Stomach (tissue), 19 donors: ENCODE measurements at regions of chr20 and their contacts with region 1.

Region 1: DNA sequence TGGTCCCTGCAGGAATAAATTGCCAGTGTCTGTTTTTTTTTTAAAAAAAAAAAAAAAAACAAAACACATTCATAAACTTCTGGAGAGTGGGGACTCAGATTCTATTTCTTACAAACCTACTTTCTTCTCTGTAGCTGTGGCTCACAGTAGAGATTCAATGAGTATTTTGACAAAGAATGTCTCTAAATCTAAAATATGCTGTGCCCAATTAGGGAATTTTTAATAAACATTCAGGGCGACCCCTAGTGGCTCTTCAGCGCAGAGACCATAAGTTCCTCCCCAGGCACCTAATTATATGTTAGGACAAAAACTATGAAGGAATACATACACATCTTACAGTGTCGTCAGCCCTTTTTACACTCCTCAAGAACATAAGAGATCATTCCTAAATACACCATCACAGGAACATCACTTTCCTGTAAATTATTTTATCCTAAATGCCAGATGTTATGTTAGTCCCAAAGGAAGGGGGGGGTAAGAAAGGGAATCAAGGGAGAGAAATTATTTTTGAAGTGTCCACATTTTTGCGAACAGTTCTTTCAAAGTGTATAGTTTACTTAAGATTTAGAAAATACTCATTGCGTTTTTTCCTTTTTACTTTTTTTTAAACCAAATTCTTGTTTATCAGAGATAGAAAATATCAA is 21.8 kb upstream of the NAA20 start:
- DNase-seq: peak in 1 of 2 donors; percentile 80
- H3K4me3 ChIP-seq: no peak overlapping the region
- H3K27ac ChIP-seq: peak overlapping the region in 3 of 5 donors; percentile 63 to 81 (median 77)
- H3K4me1 ChIP-seq: peaks cover 36 to 84% (median 56%) of the 10 kb centered on the region in 4 donors
- H3K27me3 ChIP-seq: no peaks in the 10 kb centered on the region
- CTCF ChIP-seq: peak in 5 of 7 experiments; percentile 69 to 79 (median 71)
- EP300 ChIP-seq: no peak
- POLR2A ChIP-seq: no peak

Region 2: DNA sequence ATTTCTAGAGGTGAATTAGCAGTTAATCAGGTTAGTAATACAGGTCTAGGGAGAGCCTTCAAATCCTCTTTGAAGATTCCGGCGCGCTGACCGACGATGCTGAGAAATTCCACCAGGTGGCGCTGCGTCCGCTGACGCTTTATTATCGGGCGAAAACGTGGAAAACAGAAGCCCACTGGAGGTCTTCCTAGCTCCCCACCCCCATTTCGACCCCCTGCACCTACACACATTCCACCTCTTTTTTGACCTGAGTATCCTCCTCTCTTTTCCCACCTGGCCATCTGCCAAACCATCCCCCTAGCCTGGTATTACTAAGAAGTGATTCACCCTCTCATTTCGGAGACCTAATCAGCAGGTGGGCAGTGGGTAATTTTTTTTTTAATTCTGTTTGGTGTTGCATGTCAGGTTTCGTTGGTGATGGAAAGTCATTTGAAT is 302.6 kb before region 1 on chr20:
- intact Hi-C with region 1: loop called (anchors 10 kb)
- DNase-seq: peak; percentile 71 to 76
- H3K4me3 ChIP-seq: no peak overlapping the region
- H3K27ac ChIP-seq: no peak overlapping the region
- H3K4me1 ChIP-seq: peaks cover 0 to 13% (median 0%) of the 10 kb centered on the region in 4 donors
- H3K27me3 ChIP-seq: no peaks in the 10 kb centered on the region
- CTCF ChIP-seq: peak in 5 of 7 experiments; percentile 77 to 98 (median 90)
- EP300 ChIP-seq: no peak
- POLR2A ChIP-seq: no peak

Region 3: GRCh38 chr20:19784511-19785172 is 210.7 kb before region 1 on chr20:
- intact Hi-C with region 1: loop called (anchors 10 kb)
- DNase-seq: peak; percentile 38 to 90
- H3K4me3 ChIP-seq: no peak overlapping the region
- H3K27ac ChIP-seq: peak overlapping the region; percentile 12 to 60 (median 38)
- H3K4me1 ChIP-seq: peaks cover 16 to 33% (median 29%) of the 10 kb centered on the region in 4 donors
- H3K27me3 ChIP-seq: no peaks in the 10 kb centered on the region
- CTCF ChIP-seq: peak in 5 of 7 experiments; percentile 60 to 80 (median 73)
- EP300 ChIP-seq: no peak
- POLR2A ChIP-seq: no peak

Region 4: GRCh38 chr20:19835533-19836222 is 159.7 kb before region 1 on chr20:
- intact Hi-C with region 1: no loop called
- DNase-seq: peak in 1 of 2 donors; percentile 35
- H3K4me3 ChIP-seq: no peak overlapping the region
- H3K27ac ChIP-seq: no peak overlapping the region
- H3K4me1 ChIP-seq: peaks cover 0 to 20% (median 3%) of the 10 kb centered on the region in 4 donors
- H3K27me3 ChIP-seq: no peaks in the 10 kb centered on the region
- CTCF ChIP-seq: no peak
- EP300 ChIP-seq: no peak
- POLR2A ChIP-seq: no peak

Region 5: GRCh38 chr20:19903168-19903811 is 92.1 kb before region 1 on chr20:
- intact Hi-C with region 1: loop called (anchors 10 kb)
- DNase-seq: peak; percentile 44 to 84
- H3K4me3 ChIP-seq: no peak overlapping the region
- H3K27ac ChIP-seq: peak overlapping the region in 3 of 5 donors; percentile 7 to 50 (median 29)
- H3K4me1 ChIP-seq: peaks cover 0 to 24% (median 10%) of the 10 kb centered on the region in 4 donors
- H3K27me3 ChIP-seq: no peaks in the 10 kb centered on the region
- CTCF ChIP-seq: peak in 2 of 7 experiments; percentile 18 to 32
- EP300 ChIP-seq: no peak
- POLR2A ChIP-seq: no peak